Heart left ventricle (tissue), 16 donors: ENCODE measurements at regions of chr18 and their contacts with region 1.

Region 1: DNA sequence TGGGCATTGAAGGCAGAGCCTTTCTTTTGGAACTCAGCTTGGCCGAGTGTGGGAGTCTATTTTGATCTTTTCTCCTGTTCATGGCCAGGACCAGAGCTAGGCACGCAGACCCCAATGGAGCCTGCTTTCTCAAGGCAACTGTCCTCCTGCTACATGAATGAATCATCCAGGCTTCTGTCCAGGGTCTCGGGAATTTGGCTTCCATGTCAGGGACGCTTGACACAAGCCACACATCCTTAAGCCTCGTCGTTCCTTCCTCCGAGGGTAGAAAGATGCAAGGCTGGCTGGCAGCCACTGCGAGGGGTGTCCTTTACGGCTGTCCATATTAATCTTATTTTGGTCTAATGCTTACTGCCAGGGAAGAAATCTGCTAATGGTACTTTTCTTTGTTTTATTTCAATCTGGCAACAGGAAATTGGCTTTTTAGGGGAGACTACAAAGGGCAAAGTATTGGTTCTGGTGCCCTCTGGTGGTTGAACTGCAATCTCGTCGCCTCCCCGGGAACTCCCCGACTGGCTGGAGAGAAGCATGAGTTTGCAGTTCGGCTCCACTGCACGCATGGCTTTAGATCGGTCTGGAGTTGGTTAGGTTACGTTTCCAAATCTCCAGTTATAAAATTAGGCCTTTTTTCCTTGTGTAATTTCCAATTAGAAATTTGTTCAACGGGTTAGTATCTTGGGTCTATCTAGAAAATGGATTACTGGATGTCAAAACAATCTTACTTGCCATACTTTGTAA is 135.2 kb downstream of the ALPK2 start:
- DNase-seq: peak; percentile 65 to 76 (median 73)
- ATAC-seq: peak; percentile 76 to 90 (median 83)
- H3K4me3 ChIP-seq: peak overlapping the region in 6 of 12 donors; percentile 15 to 46 (median 28)
- H3K27ac ChIP-seq: peak overlapping the region in 11 of 12 donors; percentile 43 to 73 (median 61)
- H3K4me1 ChIP-seq: peaks cover 0 to 32% (median 15%) of the 10 kb centered on the region in 12 donors
- H3K27me3 ChIP-seq: peaks cover 0 to 5% (median 0%) of the 10 kb centered on the region in 9 donors
- CTCF ChIP-seq: peak; percentile 74 to 95 (median 84)
- POLR2A ChIP-seq: no peak

Region 2: DNA sequence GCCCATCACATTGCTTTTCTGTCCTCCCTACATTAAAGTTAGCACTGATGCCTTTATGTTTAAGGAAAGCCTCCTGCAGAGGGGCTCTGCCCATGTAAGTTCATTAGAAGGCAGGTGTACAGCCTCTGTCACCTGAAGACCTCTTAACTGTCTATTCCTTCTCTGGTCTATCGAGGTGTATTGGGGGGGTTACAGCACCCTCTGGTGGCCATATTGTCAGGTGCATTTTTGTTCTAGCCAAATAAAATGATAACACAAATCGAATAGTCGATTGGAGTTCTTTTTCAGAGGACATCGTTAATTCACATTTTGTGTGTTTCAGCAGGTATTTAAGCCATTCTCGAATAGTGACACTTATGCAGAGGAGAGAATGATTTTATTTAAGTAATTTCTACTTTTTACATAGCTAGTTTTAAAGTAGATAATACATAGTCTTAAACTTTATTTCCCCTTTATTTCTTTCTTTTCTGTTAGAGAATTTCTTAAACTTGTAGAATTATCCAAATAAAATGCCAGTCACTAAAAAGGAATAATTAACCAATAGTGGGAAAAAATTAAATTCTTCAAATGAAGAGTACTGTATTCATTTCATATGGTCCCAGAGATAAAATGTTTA is 312.8 kb before region 1 on chr18:
- intact Hi-C with region 1: loop called in 1 of 10 experiments (anchors 10 kb)
- DNase-seq: peak in 1 of 5 donors; percentile 31
- ATAC-seq: peak in 2 of 4 donors; percentile 43
- H3K4me3 ChIP-seq: no peak overlapping the region
- H3K27ac ChIP-seq: no peak overlapping the region
- H3K4me1 ChIP-seq: peaks cover 0 to 8% (median 0%) of the 10 kb centered on the region in 12 donors
- H3K27me3 ChIP-seq: no peaks in the 10 kb centered on the region
- CTCF ChIP-seq: peak; percentile 76 to 94 (median 88)
- POLR2A ChIP-seq: no peak

Region 3: DNA sequence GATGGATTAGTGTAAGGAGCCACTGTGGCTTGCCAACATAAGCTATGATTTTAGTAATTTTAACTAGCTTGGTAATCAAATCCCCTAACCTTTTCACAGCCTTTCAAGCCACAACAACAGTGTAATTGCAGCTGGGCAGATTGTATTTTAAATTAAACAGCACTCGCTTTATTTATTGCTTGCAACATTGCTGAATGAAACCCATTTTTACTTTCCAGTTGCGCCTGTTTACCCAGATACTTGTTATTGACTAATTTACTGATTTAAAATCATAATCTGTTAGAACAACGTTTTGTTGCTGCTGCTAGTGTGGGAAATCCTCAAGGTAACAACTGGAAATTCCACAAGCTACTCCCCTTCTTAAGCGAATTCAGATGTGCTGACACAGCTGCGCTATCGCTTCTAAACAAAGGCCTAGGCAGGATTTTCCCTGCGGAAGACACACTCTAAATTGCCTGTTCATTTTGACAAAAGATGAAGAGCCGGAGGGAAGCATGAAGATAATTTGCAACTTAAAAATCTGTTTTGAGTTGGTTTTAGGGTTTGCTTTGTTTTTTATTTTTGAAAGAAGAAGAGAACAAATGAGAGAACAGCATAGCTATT is 148.7 kb before region 1 on chr18:
- intact Hi-C with region 1: loop called in 1 of 10 experiments (anchors 10 kb)
- DNase-seq: no peak
- ATAC-seq: no peak
- H3K4me3 ChIP-seq: no peak overlapping the region
- H3K27ac ChIP-seq: peak overlapping the region in 5 of 12 donors; percentile 10 to 32 (median 14)
- H3K4me1 ChIP-seq: peaks cover 0 to 16% (median 0%) of the 10 kb centered on the region in 12 donors
- H3K27me3 ChIP-seq: no peaks in the 10 kb centered on the region
- CTCF ChIP-seq: no peak
- POLR2A ChIP-seq: no peak

Region 4: GRCh38 chr18:58392324-58393000 is 101.2 kb before region 1 on chr18:
- intact Hi-C with region 1: loop called in 2 of 10 experiments (anchors 5 kb)
- DNase-seq: no peak
- ATAC-seq: peak in 3 of 4 donors; percentile 36 to 60 (median 50)
- H3K4me3 ChIP-seq: no peak overlapping the region
- H3K27ac ChIP-seq: peak overlapping the region in 3 of 12 donors; percentile 16 to 74 (median 51)
- H3K4me1 ChIP-seq: peaks cover 0 to 25% (median 0%) of the 10 kb centered on the region in 12 donors
- H3K27me3 ChIP-seq: no peaks in the 10 kb centered on the region
- CTCF ChIP-seq: no peak
- POLR2A ChIP-seq: no peak

Region 5: DNA sequence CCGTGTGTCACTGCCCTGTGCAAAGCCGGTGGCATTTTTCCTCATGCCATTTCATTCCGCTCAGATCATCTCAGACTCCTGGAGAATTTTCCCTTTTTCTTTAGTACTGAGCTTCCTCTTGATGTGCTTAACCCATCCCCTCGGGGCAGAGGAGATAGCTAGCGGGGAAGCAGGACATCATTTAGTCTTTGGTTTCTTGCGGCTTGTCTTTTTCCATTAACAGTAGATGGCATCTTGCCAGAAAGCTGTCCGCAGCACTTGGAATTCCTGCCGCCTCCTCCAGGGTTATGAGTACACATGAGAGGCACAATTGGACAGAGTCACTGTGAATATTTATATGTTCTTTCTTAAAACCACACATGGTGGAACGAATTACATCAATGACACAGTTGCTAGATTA is 91.4 kb before region 1 on chr18:
- intact Hi-C with region 1: loop called in 9 of 10 experiments (anchors 1 to 5 kb)
- DNase-seq: peak in 1 of 5 donors; percentile 33
- ATAC-seq: peak in 2 of 4 donors; percentile 20 to 45
- H3K4me3 ChIP-seq: no peak overlapping the region
- H3K27ac ChIP-seq: peak overlapping the region in 1 of 12 donors; percentile 56
- H3K4me1 ChIP-seq: peaks cover 0 to 22% (median 9%) of the 10 kb centered on the region in 12 donors
- H3K27me3 ChIP-seq: no peaks in the 10 kb centered on the region
- CTCF ChIP-seq: no peak
- POLR2A ChIP-seq: no peak

Region 6: GRCh38 chr18:58407649-58408407 is 85.9 kb before region 1 on chr18:
- intact Hi-C with region 1: loop called in 5 of 10 experiments (anchors 1 to 5 kb)
- DNase-seq: no peak
- ATAC-seq: no peak
- H3K4me3 ChIP-seq: no peak overlapping the region
- H3K27ac ChIP-seq: no peak overlapping the region
- H3K4me1 ChIP-seq: peaks cover 0 to 16% (median 5%) of the 10 kb centered on the region in 12 donors
- H3K27me3 ChIP-seq: no peaks in the 10 kb centered on the region
- CTCF ChIP-seq: no peak
- POLR2A ChIP-seq: no peak